Mammary epithelial cell (primary cell): ENCODE measurements at regions of chr14 and their contacts with region 1.

Region 1: DNA sequence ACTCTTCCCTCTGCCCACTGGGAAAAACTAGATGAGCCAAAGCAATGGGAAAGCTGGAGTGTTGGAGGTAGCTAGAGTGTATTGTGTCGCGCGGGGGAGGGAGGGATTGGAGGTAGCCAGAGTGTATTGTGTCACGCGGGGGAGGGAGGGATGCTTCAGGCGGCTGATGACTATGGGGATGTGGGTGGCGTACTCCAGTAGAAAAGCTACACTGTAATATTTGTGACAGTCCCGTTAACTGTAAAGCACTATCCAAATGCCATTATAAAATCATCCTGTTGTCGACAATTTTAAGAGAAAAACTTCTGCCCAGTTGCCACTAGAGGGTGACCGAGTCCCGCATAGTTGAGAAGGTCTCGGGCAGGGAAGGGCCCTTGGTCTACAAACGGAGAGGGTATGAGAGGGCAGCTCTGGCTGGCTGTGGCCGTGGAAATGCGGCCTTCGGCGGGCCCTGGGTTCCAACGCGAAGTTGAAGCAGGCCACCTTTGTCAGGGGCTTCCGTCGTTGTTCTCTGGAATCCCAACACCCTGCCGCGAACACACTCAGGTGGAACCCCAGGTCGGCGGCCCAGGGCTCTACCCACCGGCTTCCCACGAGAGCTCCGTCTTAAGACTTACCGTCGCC is 15.1 kb upstream of the PLEK2 start:
- DNase-seq: peak; percentile 66
- H3K4me3 ChIP-seq: no peak overlapping the region
- H3K27ac ChIP-seq: no peak overlapping the region
- H3K4me1 ChIP-seq: peaks cover 12% of the 10 kb centered on the region
- H3K27me3 ChIP-seq: no peaks in the 10 kb centered on the region
- CTCF ChIP-seq: peak; percentile 75 to 84

Region 2: DNA sequence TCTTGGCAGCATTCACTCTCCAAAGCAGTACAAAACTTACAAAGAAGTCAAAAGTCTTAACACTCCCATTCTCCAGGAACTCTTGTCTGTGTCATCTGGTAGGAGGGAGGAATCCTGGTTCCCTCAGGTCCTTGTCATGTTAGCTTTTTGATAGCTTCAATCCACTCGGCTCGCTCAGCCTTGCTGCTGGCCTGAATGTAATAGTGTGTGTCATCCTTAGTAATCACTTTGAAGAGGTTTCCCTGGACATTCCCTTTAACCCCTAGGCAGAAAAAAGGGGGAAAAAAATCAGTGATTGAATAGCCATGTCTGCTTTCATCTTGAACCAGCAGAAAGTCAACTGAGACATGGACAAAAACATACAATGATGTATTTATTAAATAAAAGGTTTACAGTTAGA is 39.9 kb before region 1 on chr14:
- CTCF ChIA-PET with region 1: no interaction called
- dilution Hi-C with region 1: no loop called
- in situ Hi-C with region 1: no loop called
- intact Hi-C with region 1: no loop called
- DNase-seq: peak; percentile 31
- H3K4me3 ChIP-seq: no peak overlapping the region
- H3K27ac ChIP-seq: no peak overlapping the region
- H3K4me1 ChIP-seq: peaks cover 11% of the 10 kb centered on the region
- H3K27me3 ChIP-seq: no peaks in the 10 kb centered on the region
- CTCF ChIP-seq: no peak

Region 3: DNA sequence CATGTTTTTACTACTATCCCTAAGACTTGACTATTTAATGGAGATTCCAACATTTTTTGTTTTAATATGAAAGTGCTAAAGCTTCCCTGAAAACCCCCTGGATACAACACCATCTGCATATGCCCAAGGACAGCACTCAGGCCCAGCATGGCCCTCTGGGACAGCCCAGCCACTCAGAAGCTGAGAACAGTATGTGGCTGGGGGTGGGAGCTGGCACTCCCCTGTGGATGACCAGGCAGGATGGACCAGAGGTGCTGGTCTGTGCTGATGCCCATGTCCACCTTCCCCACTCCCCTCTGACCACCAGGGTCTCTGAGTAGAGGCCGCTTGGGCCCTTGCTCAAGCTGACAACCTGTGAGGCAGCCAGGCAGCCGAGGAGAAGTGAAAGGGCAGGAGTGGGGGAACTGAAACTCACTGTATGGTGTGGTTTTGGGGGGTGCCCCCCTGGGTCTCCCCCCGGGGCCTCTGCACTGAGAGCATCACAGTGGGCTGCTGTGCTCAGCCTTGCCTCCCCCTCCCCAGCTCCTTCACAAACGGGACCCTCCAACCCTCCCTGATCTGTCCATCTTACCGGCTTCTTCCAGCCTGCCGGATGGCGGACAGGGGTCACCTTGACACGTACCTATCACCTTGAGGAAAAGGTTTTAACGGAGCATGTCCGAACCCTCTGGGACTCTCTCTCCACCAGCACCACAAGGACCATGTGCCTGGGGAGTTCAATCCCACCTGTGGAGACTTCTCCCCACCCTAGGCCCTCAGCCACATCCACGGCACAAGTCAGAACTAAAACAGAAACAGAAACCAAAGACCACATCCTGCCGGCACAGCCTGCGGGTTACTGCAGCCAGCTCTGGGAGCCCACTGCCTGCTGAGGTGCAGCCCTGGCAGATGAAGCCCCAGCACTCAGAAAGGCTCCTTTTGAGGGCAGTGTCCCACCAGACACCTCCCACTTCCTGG is 61.1 kb after region 1 on chr14 and contains the start of gene TMEM229B:
- CTCF ChIA-PET with region 1: no interaction called
- dilution Hi-C with region 1: no loop called
- in situ Hi-C with region 1: no loop called
- intact Hi-C with region 1: no loop called
- DNase-seq: no peak
- H3K4me3 ChIP-seq: no peak within 1 kb of the TSS
- H3K27ac ChIP-seq: no peak within 1 kb of the TSS
- H3K4me1 ChIP-seq: no peaks in the 10 kb centered on the region
- H3K27me3 ChIP-seq: no peaks in the 10 kb centered on the region
- CTCF ChIP-seq: no peak
- total RNA-seq, gene TMEM229B: 0.50 to 2.0 TPM

Region 4: DNA sequence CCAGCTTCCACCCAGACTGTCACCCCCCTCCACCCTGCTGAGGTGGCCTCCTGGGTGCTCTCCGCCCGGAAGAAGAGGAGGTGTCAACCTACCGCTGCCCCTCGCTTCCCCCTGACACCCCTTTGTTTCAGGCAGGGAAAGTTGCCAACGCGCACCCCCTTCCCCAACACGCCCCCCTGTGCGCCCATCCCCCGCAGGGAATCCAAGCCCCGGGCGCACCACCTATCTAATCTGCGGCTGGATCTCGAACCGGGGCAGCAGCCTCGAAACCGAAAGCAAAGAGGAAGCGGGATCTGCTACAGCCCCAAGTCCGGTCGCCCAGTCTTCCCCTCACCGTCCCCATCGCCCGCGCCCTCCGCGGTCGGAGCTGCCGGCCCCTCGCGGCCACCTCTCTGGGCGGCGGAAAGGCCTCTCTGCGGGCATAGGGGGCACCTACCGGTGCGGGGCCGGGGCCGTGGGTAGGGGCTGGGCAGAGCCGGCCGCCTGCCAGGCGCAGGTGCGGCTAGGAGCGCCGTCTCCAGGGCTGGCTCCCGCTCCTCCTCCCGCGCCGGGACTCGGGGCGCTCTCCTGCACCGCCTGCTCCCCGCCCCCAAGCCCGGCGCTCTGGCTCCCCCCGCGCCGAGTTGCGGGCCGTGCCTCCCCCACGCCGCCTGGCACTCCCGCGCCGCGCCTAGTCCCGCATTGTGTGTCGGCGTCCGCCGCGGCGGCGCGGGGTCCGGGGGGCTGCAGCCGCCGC is 87.7 kb after region 1 on chr14:
- CTCF ChIA-PET with region 1: no interaction called
- dilution Hi-C with region 1: no loop called
- in situ Hi-C with region 1: no loop called
- intact Hi-C with region 1: loop called (anchors 1 kb)
- DNase-seq: no peak
- H3K4me3 ChIP-seq: peak overlapping the region; percentile 65 to 71 (median 71)
- H3K27ac ChIP-seq: no peak overlapping the region
- H3K4me1 ChIP-seq: peaks cover 19% of the 10 kb centered on the region
- H3K27me3 ChIP-seq: no peaks in the 10 kb centered on the region
- CTCF ChIP-seq: no peak

Region 5: DNA sequence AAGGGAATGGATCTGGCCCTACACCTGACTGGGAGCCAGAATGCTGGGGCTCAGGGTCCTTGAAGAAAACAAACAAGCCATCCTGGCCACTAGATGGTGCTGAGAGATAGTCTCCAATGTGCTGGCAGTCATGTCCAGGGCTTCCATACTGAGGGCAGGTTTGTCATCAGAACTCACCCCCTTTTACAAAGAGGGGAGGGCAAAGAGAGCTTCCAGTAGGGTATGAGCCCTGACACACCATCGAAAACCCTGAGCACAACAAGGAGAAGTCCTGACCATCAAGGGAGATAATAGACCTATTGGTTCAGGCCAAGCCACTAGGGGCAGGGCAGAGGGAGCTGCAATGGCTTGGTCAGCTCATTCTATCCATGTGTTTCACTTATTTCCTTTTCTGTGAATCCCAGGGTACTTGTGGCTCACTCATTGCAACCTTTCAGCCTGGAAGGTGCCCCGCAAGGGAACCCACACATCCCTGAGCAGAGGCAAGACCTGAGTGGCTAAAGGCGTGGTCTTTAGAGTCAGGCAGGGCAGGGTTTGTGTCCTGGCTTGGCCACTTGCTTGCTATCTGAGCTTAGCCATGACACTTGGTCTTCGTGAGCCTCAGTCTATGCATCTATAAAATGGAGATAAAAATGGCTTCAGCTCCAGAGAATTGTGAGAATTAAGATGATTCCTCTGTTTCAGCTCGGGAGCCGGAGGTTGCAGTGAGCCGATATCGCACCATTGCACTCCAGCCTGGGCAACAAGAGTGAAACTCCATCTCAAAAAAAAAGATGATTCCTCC is 99.8 kb after region 1 on chr14:
- CTCF ChIA-PET with region 1: interaction called, 7 read pairs
- dilution Hi-C with region 1: no loop called
- in situ Hi-C with region 1: no loop called
- intact Hi-C with region 1: loop called (anchors 1 kb)
- DNase-seq: peak; percentile 51
- H3K4me3 ChIP-seq: no peak overlapping the region
- H3K27ac ChIP-seq: no peak overlapping the region
- H3K4me1 ChIP-seq: peaks cover 6% of the 10 kb centered on the region
- H3K27me3 ChIP-seq: no peaks in the 10 kb centered on the region
- CTCF ChIP-seq: peak; percentile 73 to 82

Region 6: GRCh38 chr14:67571272-67571850 is 144.3 kb after region 1 on chr14:
- CTCF ChIA-PET with region 1: interaction called, 17 read pairs
- dilution Hi-C with region 1: loop called (anchors 10 kb)
- in situ Hi-C with region 1: loop called (anchors 5 to 10 kb)
- intact Hi-C with region 1: loop called (anchors 1 kb)
- DNase-seq: peak; percentile 37
- H3K4me3 ChIP-seq: no peak overlapping the region
- H3K27ac ChIP-seq: no peak overlapping the region
- H3K4me1 ChIP-seq: no peaks in the 10 kb centered on the region
- H3K27me3 ChIP-seq: no peaks in the 10 kb centered on the region
- CTCF ChIP-seq: peak; percentile 94 to 97

Region 7: DNA sequence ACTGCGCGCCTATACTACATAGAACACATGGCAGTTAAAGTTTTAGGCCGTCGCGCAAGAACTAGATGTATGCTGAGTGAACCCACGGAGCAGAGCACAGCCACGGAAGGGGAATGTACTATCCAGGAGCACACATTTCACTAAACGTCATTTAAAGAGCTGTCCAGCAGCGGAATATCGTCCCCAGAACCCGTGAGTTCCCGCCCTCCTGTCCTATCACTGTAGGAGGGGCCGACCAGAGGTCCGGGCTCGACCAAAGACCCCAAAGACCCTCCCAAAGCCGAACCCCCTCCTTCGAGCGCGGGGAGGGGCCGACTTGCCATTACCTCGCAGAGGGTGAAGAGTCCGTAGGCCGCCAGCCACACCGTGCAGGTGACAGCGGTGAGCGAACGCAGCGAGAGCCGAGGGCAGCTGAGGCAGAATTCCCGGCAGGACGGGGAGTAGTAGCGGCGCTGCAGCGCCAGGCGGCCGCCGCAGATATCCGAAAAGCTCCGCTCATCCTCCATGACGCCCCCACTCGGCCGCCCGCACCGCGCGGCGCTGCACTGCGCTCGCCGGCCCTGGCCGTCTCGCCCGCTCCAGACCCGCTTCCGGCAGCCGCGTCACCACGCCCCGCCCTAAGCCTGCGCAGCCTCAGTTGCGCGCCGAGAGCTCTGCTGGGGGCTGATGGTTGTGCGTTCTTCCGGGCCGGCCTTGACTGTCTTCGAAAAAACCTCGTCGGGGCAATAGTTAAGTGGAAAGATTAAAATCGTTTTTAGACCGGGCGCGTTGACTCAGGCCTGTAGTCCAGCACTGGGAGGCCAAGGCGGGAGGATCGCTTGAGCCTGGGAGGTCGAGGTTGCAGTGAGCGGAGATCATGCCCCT is 172.8 kb after region 1 on chr14 and contains the start of gene PIGH:
- CTCF ChIA-PET with region 1: no interaction called
- dilution Hi-C with region 1: no loop called
- in situ Hi-C with region 1: no loop called
- intact Hi-C with region 1: loop called (anchors 1 kb)
- DNase-seq: peak; percentile 84
- H3K4me3 ChIP-seq: peak within 1 kb of the TSS; percentile 88 to 92 (median 91)
- H3K27ac ChIP-seq: peak within 1 kb of the TSS; percentile 63
- H3K4me1 ChIP-seq: peaks cover 4% of the 10 kb centered on the region
- H3K27me3 ChIP-seq: no peaks in the 10 kb centered on the region
- CTCF ChIP-seq: peak; percentile 13 to 67
- total RNA-seq, gene PIGH: 16.7 to 18.2 TPM

Region 8: GRCh38 chr14:67666750-67667449 is 239.8 kb after region 1 on chr14:
- CTCF ChIA-PET with region 1: no interaction called
- dilution Hi-C with region 1: no loop called
- in situ Hi-C with region 1: no loop called
- intact Hi-C with region 1: loop called (anchors 2 kb)
- DNase-seq: peak; percentile 51
- H3K4me3 ChIP-seq: no peak overlapping the region
- H3K27ac ChIP-seq: no peak overlapping the region
- H3K4me1 ChIP-seq: peaks cover 11% of the 10 kb centered on the region
- H3K27me3 ChIP-seq: no peaks in the 10 kb centered on the region
- CTCF ChIP-seq: peak; percentile 68 to 76